ENCODE measurements at regions of chr4 and their contacts with region 1.

Region 1: DNA sequence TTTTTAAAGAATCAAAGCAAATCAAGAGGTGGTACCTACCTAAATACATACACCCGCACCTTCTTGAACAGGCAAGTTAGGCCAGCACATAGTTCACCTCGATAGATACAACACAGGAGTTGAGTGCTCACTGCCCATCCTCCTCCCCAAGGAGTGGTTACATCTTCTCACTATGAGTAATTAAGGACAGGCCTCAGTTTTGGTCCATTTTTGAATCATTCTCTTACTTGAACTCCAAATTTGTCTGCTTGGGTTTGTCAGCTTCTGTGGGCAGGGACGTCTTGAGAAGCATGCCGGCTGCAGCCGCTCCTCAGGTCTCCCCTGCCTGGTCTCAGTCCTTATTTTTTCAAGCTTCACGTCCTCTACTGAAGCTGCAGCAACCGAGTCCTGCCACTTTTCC is 190.6 kb upstream of the RBPJ start:
- DNase-seq: peak; percentile 28
- H3K4me3 Mint-ChIP-seq: peak overlapping the region; percentile 34
- H3K27ac Mint-ChIP-seq: peak overlapping the region; percentile 90
- H3K4me1 Mint-ChIP-seq: peaks cover 81% of the 10 kb centered on the region
- H3K27me3 Mint-ChIP-seq: no peaks in the 10 kb centered on the region

Region 2: GRCh38 chr4:26028793-26029567 is 101.2 kb before region 1 on chr4:
- intact Hi-C with region 1: loop called (anchors 2 kb)
- DNase-seq: peak; percentile 59
- H3K4me3 Mint-ChIP-seq: no peak overlapping the region
- H3K27ac Mint-ChIP-seq: peak overlapping the region; percentile 67
- H3K4me1 Mint-ChIP-seq: peaks cover 25% of the 10 kb centered on the region
- H3K27me3 Mint-ChIP-seq: peaks cover 2% of the 10 kb centered on the region

Region 3: GRCh38 chr4:26088433-26088928 is 41.7 kb before region 1 on chr4:
- intact Hi-C with region 1: loop called (anchors 1 kb)
- DNase-seq: no peak
- H3K4me3 Mint-ChIP-seq: peak overlapping the region; percentile 55
- H3K27ac Mint-ChIP-seq: peak overlapping the region; percentile 94
- H3K4me1 Mint-ChIP-seq: peaks cover 70% of the 10 kb centered on the region
- H3K27me3 Mint-ChIP-seq: no peaks in the 10 kb centered on the region

Region 4: DNA sequence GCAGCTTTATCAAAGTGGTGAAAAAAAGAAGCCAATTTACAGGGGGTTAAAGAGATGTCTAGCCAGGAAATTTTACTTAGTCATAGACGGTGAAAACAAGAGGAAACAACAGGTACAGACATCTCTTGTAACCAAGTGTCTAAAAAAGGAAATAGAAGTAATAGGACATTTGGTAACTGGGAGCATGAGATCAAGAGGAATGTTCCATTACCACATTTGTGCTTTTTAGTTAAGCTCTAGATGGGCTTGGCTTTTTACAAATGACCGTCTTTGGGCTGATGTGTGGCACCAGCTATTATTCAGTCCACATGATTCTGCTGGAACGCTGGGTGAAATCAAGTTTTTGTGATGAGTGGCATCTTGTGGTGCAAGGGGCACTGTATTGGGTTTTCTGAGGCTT is 36.6 kb before region 1 on chr4:
- intact Hi-C with region 1: loop called (anchors 1 kb)
- DNase-seq: no peak
- H3K4me3 Mint-ChIP-seq: no peak overlapping the region
- H3K27ac Mint-ChIP-seq: peak overlapping the region; percentile 91
- H3K4me1 Mint-ChIP-seq: peaks cover 62% of the 10 kb centered on the region
- H3K27me3 Mint-ChIP-seq: no peaks in the 10 kb centered on the region

Region 5: GRCh38 chr4:26141911-26142638 is 11.9 kb after region 1 on chr4:
- intact Hi-C with region 1: loop called (anchors 1 kb)
- DNase-seq: no peak
- H3K4me3 Mint-ChIP-seq: peak overlapping the region; percentile 22
- H3K27ac Mint-ChIP-seq: peak overlapping the region; percentile 89
- H3K4me1 Mint-ChIP-seq: peaks cover 73% of the 10 kb centered on the region
- H3K27me3 Mint-ChIP-seq: no peaks in the 10 kb centered on the region